Caco-2 (cell line): ENCODE measurements at regions of chr7 and their contacts with region 1.

Region 1: DNA sequence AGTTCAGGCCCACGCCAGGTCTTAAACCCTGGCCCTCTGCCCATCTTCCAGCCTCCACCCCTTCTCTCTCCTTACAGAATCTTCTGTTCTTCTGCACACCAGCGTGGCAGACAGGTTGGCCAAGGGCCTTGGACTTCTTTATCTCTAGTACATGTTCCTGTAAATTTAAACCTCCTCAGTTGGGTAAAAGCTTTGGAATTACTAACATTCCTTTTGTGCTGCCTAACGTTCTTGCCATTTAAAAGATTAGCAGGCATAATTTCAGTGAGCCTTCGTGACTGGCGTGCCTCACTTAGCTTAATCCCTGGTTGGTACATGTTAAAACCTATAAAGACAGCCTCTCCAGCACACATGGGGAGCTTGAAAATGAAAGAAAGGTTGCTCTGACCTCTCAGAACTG is 192.2 kb downstream of the CUX1 start:
- DNase-seq: peak; percentile 29 to 44
- H3K4me3 ChIP-seq: no peak overlapping the region
- H3K4me3 Mint-ChIP-seq: peak overlapping the region; percentile 24
- H3K27ac Mint-ChIP-seq: peak overlapping the region; percentile 86
- H3K4me1 ChIP-seq: peaks cover 87% of the 10 kb centered on the region
- H3K4me1 Mint-ChIP-seq: peaks cover 67% of the 10 kb centered on the region
- H3K27me3 ChIP-seq: no peaks in the 10 kb centered on the region
- H3K27me3 Mint-ChIP-seq: no peaks in the 10 kb centered on the region
- CTCF ChIP-seq: no peak

Region 2: DNA sequence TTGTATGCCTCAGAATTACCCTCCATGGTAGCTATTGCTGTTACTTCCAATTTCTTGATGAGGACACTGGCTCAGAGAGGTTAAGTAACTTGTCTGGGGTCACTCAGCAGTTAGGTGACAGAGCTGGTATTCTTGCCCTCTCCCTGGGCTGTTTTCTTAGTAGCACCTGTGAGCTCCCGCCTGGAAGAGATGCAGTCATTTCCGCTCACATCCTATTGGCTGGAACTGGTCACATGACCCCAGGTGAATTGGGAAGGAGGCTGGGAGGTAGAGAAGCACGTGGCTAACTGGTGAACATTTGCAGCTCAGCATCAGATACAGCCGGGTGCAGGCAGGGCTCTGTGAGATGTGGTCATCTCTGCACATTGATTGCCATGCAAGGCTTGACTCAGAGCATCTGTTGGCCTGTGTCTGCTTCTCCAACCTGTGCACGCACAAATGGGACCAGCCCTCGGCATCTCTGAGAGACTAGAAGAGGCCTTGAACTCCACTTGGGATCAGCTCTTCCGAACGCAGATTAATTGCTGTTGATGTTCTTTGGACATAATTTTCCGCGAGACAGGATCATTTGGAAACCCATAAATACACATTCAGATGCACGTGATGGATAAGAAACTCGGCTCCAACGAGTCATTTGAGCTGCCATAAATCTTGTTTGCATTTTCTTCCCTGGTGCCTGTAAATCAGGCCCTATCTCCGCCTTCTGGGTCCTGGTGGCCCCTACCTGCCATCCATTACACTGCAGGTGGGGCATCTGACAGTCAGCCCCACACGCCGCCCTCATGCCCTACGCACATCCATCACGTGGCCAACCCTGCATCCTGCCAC is 423.3 kb before region 1 on chr7:
- CTCF ChIA-PET with region 1: no interaction called
- POLR2A ChIA-PET with region 1: no interaction called
- intact Hi-C with region 1: loop called (anchors 2 kb)
- DNase-seq: peak; percentile 72 to 89
- H3K4me3 ChIP-seq: no peak overlapping the region
- H3K4me3 Mint-ChIP-seq: peak overlapping the region; percentile 44
- H3K27ac Mint-ChIP-seq: peak overlapping the region; percentile 74
- H3K4me1 ChIP-seq: peaks cover 56% of the 10 kb centered on the region
- H3K4me1 Mint-ChIP-seq: peaks cover 48% of the 10 kb centered on the region
- H3K27me3 ChIP-seq: no peaks in the 10 kb centered on the region
- H3K27me3 Mint-ChIP-seq: no peaks in the 10 kb centered on the region
- CTCF ChIP-seq: peak in 1 of 2 experiments; percentile 28

Region 3: GRCh38 chr7:101882595-101883564 is 126.7 kb before region 1 on chr7:
- CTCF ChIA-PET with region 1: no interaction called
- POLR2A ChIA-PET with region 1: interaction called, 14 read pairs
- intact Hi-C with region 1: loop called (anchors 1 kb)
- DNase-seq: peak; percentile 92
- H3K4me3 ChIP-seq: peak overlapping the region; percentile 13; the same call in 1 of the 2 replicates
- H3K4me3 Mint-ChIP-seq: peak overlapping the region; percentile 66
- H3K27ac Mint-ChIP-seq: peak overlapping the region; percentile 96
- H3K4me1 ChIP-seq: peaks cover 63% of the 10 kb centered on the region
- H3K4me1 Mint-ChIP-seq: peaks cover 62% of the 10 kb centered on the region
- H3K27me3 ChIP-seq: no peaks in the 10 kb centered on the region
- H3K27me3 Mint-ChIP-seq: no peaks in the 10 kb centered on the region
- CTCF ChIP-seq: peak in 1 of 2 experiments; percentile 21

Region 4: GRCh38 chr7:101964680-101965452 is 44.8 kb before region 1 on chr7:
- CTCF ChIA-PET with region 1: no interaction called
- POLR2A ChIA-PET with region 1: no interaction called
- intact Hi-C with region 1: no loop called
- DNase-seq: no peak
- H3K4me3 ChIP-seq: no peak overlapping the region
- H3K4me3 Mint-ChIP-seq: no peak overlapping the region
- H3K27ac Mint-ChIP-seq: no peak overlapping the region
- H3K4me1 ChIP-seq: peaks cover 16% of the 10 kb centered on the region
- H3K4me1 Mint-ChIP-seq: peaks cover 26% of the 10 kb centered on the region
- H3K27me3 ChIP-seq: no peaks in the 10 kb centered on the region
- H3K27me3 Mint-ChIP-seq: no peaks in the 10 kb centered on the region
- CTCF ChIP-seq: no peak

Region 5: GRCh38 chr7:101975046-101975445 is 34.6 kb before region 1 on chr7:
- CTCF ChIA-PET with region 1: no interaction called
- POLR2A ChIA-PET with region 1: no interaction called
- intact Hi-C with region 1: loop called (anchors 1 kb)
- DNase-seq: no peak
- H3K4me3 ChIP-seq: no peak overlapping the region
- H3K4me3 Mint-ChIP-seq: peak overlapping the region; percentile 11
- H3K27ac Mint-ChIP-seq: peak overlapping the region; percentile 34
- H3K4me1 ChIP-seq: peaks cover 18% of the 10 kb centered on the region
- H3K4me1 Mint-ChIP-seq: peaks cover 42% of the 10 kb centered on the region
- H3K27me3 ChIP-seq: no peaks in the 10 kb centered on the region
- H3K27me3 Mint-ChIP-seq: no peaks in the 10 kb centered on the region
- CTCF ChIP-seq: no peak

Region 6: DNA sequence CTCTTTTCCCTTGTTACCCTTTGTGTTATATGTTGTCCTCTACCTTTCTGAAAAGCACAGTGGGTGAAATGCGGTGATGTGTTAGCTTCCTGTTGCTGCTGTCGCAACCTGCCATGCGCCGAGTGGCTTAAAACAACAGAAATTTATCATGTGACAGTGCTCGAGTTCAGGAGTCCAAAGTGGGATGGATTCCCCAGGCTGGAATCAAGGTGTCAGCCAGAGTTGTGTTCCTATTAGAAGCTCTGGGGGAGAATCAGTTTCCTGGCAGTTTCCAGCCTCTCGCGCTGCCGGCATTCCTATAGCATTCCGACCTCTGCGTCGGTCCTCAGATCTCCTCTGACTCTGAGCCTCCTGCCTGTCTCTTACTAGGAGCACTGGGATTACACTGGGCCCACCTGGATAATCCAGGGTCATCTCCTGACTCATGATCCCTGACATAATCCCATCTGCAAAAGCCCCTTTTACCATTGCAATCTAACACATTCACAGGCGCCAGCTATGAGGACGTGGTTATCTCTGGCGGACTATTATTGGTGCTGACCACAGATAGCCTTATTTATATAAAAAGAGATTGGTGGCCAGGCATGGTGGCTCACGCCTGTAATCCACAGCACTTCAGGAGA is 15.3 kb after region 1 on chr7:
- CTCF ChIA-PET with region 1: no interaction called
- POLR2A ChIA-PET with region 1: interaction called, 20 read pairs
- intact Hi-C with region 1: loop called (anchors 1 kb)
- DNase-seq: peak; percentile 85 to 90
- H3K4me3 ChIP-seq: no peak overlapping the region
- H3K4me3 Mint-ChIP-seq: peak overlapping the region; percentile 54
- H3K27ac Mint-ChIP-seq: peak overlapping the region; percentile 78
- H3K4me1 ChIP-seq: peaks cover 51% of the 10 kb centered on the region
- H3K4me1 Mint-ChIP-seq: peaks cover 42% of the 10 kb centered on the region
- H3K27me3 ChIP-seq: no peaks in the 10 kb centered on the region
- H3K27me3 Mint-ChIP-seq: no peaks in the 10 kb centered on the region
- CTCF ChIP-seq: no peak

Region 7: DNA sequence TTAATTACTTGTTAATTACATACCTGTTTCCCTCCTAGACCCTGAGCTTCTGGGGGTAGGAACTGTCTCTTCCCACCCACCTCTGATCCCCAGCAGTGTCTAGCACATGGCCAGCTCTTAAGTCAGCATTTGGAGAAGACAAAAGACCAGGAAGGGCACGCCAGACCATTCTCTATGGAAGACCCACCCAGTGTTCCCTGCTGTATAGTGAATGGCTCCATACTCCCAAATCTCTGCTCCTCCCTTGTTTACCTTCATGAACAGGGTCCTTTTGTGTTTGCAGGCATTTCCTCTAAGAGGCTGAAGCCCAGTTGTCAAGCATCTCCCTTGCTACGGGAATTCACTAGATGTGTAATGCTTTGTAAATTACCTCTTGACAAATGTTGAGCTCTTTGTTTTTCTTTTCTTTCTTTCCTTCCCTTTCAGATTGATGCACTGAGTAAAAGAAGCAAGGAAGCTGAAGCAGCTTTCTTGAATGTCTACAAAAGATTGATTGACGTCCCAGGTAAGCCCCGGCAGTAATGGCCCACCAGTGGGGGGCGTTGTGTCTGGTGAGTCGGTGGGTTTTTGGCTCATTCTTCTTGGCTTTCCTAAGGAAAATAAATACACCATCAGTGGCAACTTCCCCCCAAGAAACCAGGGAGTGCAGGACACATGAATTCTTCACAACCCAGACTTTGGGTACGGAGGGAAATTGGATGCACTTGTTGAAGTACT is 60.4 kb after region 1 on chr7:
- CTCF ChIA-PET with region 1: no interaction called
- POLR2A ChIA-PET with region 1: no interaction called
- intact Hi-C with region 1: no loop called
- DNase-seq: peak in 1 of 2 experiments; percentile 21
- H3K4me3 ChIP-seq: no peak overlapping the region
- H3K4me3 Mint-ChIP-seq: no peak overlapping the region
- H3K27ac Mint-ChIP-seq: no peak overlapping the region
- H3K4me1 ChIP-seq: peaks cover under 1% of the 10 kb centered on the region; the same call in 1 of the 2 replicates
- H3K4me1 Mint-ChIP-seq: peaks cover 11% of the 10 kb centered on the region
- H3K27me3 ChIP-seq: no peaks in the 10 kb centered on the region
- H3K27me3 Mint-ChIP-seq: no peaks in the 10 kb centered on the region
- CTCF ChIP-seq: no peak

Region 8: GRCh38 chr7:102125127-102125561 is 115.5 kb after region 1 on chr7:
- CTCF ChIA-PET with region 1: no interaction called
- POLR2A ChIA-PET with region 1: no interaction called
- intact Hi-C with region 1: loop called (anchors 5 kb)
- DNase-seq: peak; percentile 24 to 47
- H3K4me3 ChIP-seq: no peak overlapping the region
- H3K4me3 Mint-ChIP-seq: no peak overlapping the region
- H3K27ac Mint-ChIP-seq: no peak overlapping the region
- H3K4me1 ChIP-seq: peaks cover 21% of the 10 kb centered on the region
- H3K4me1 Mint-ChIP-seq: peaks cover 26% of the 10 kb centered on the region
- H3K27me3 ChIP-seq: no peaks in the 10 kb centered on the region
- H3K27me3 Mint-ChIP-seq: no peaks in the 10 kb centered on the region
- CTCF ChIP-seq: no peak